HCT116 (cell line): ENCODE measurements at regions of chr6 and their contacts with region 1.

Region 1: GRCh38 chr6:40308533-40309306 is 278.4 kb downstream of the LRFN2 start:
- DNase-seq: peak; percentile 13
- ATAC-seq: peak; percentile 90
- H3K4me3 ChIP-seq: no peak overlapping the region
- H3K27ac ChIP-seq: no peak overlapping the region
- H3K4me1 ChIP-seq: no peaks in the 10 kb centered on the region
- H3K27me3 ChIP-seq: peaks cover 55% of the 10 kb centered on the region
- CTCF ChIP-seq: peak; percentile 45 to 94 (median 87); a peak in 5 of 6 replicates
- POLR2A ChIP-seq: no peak
- RAD21 ChIP-seq: peak; percentile 61

Region 2: DNA sequence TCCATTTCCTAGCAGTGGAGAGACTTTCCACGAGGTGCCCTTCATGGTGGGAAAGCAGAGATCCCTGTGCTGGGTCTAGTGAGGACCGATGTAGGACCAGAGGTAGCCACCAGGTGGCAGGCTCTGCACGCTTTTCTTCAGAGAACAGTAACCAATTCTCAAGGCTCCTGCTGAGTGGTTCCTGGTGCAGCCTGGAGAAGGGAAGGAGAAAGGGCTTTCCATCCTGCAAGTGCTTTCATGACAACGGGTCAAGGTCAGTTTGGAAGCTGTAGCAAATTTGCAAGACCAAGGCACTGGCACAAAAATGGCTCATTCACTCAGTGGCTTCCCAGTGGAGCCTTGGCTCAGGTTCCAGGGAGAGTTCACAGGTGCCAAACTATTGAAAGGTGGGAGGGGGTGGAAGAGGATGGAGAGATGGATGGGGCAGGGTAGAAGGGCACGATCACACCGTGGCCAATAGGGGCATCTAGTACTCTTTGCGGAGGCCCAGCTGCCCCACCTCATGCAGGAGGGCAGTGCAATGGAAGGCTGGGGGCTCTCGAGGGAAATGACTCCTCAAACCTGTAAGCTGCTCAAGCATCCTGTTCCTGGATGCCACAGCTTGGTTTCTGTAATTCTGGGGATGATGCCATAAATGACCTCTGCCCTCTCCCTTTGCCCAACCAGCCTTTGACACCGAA is 960.7 kb before region 1 on chr6:
- CTCF ChIA-PET with region 1: no interaction called
- POLR2A ChIA-PET with region 1: no interaction called
- RAD21 ChIA-PET with region 1: no interaction called
- intact Hi-C with region 1: loop called (anchors 5 kb)
- DNase-seq: peak; percentile 24
- ATAC-seq: peak; percentile 92
- H3K4me3 ChIP-seq: no peak overlapping the region
- H3K27ac ChIP-seq: no peak overlapping the region
- H3K4me1 ChIP-seq: no peaks in the 10 kb centered on the region
- H3K27me3 ChIP-seq: no peaks in the 10 kb centered on the region; the same call in 1 of the 2 replicates
- CTCF ChIP-seq: peak; percentile 51 to 87 (median 85); a peak in 5 of 6 replicates
- POLR2A ChIP-seq: no peak
- RAD21 ChIP-seq: peak; percentile 79

Region 3: DNA sequence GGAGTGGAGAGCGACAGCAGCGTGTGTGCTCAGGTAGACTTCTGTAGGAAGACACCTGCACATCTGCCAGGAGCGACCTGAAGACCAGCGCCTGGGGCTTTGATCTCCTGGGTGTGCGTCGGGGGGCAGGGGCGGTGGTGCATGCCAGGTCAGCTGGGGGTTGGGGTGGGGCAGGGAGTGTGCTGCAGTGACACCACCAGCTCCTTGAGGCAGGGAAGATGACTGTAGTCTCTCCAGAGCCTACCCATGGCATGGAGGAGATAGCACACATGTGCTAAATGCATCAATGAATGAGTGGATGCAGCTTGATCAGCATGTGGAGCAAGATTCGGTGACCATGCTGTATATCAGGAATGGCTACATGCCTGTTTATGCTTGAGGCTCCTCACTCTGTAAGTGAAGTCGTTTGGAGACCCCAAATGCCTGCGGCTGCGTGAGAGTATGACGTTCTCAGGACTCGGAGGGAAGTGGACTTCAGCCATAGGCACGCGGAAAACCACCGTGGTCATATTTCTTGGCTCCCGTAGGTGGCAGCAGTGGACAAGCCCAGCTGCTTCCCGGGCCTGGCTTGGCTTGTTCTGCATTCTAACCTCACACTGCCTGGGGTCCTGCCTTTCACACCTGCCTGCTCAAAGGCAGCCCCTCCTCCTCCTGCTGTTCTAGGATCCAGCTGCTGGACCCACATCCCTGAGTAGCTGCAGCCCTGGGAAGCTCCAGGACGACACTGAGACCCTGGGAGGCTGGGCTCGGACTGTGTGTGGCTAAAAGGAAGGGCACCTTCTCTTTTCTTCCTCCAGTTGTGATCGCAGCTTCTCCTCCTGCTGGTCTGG is 946.8 kb before region 1 on chr6:
- CTCF ChIA-PET with region 1: no interaction called
- POLR2A ChIA-PET with region 1: no interaction called
- RAD21 ChIA-PET with region 1: no interaction called
- intact Hi-C with region 1: loop called (anchors 5 kb)
- DNase-seq: peak; percentile 48
- ATAC-seq: peak; percentile 95
- H3K4me3 ChIP-seq: no peak overlapping the region
- H3K27ac ChIP-seq: no peak overlapping the region
- H3K4me1 ChIP-seq: peaks cover 0 to 15% of the 10 kb centered on the region in 2 experiments; a peak in 2 of 4 replicates
- H3K27me3 ChIP-seq: no peaks in the 10 kb centered on the region
- CTCF ChIP-seq: peak; percentile 39 to 80 (median 71); a peak in 5 of 6 replicates
- POLR2A ChIP-seq: no peak
- RAD21 ChIP-seq: peak; percentile 79

Region 4: GRCh38 chr6:39865011-39865888 is 443.5 kb before region 1 on chr6:
- CTCF ChIA-PET with region 1: interaction called, 4 read pairs
- POLR2A ChIA-PET with region 1: no interaction called
- RAD21 ChIA-PET with region 1: no interaction called
- intact Hi-C with region 1: loop called (anchors 5 kb)
- DNase-seq: peak; percentile 50
- ATAC-seq: peak; percentile 92
- H3K4me3 ChIP-seq: no peak overlapping the region
- H3K27ac ChIP-seq: no peak overlapping the region
- H3K4me1 ChIP-seq: no peaks in the 10 kb centered on the region
- H3K27me3 ChIP-seq: peaks cover 25% of the 10 kb centered on the region
- CTCF ChIP-seq: peak; percentile 38 to 84 (median 84); a peak in 5 of 6 replicates
- POLR2A ChIP-seq: no peak
- RAD21 ChIP-seq: peak; percentile 56

Region 5: GRCh38 chr6:39980839-39981580 is 327.7 kb before region 1 on chr6:
- CTCF ChIA-PET with region 1: interaction called, 4 read pairs
- POLR2A ChIA-PET with region 1: no interaction called
- RAD21 ChIA-PET with region 1: no interaction called
- intact Hi-C with region 1: loop called (anchors 1 kb)
- DNase-seq: peak; percentile 37
- ATAC-seq: peak; percentile 84
- H3K4me3 ChIP-seq: no peak overlapping the region
- H3K27ac ChIP-seq: no peak overlapping the region
- H3K4me1 ChIP-seq: no peaks in the 10 kb centered on the region
- H3K27me3 ChIP-seq: no peaks in the 10 kb centered on the region; the same call in 1 of the 2 replicates
- CTCF ChIP-seq: peak; percentile 40 to 55 (median 54); a peak in 5 of 6 replicates
- POLR2A ChIP-seq: no peak
- RAD21 ChIP-seq: peak; percentile 66